ENCODE measurements at regions of chr20 and their contacts with region 1.

Region 1: GRCh38 chr20:37178839-37179670 is at the starts of genes MROH8 and RPN2:
- DNase-seq: peak; percentile 100
- H3K4me3 ChIP-seq: peak within 1 kb of the TSS; percentile 71
- H3K4me3 Mint-ChIP-seq: peak within 1 kb of the TSS; percentile 94
- H3K27ac Mint-ChIP-seq: peak within 1 kb of the TSS; percentile 98
- H3K4me1 ChIP-seq: peaks cover 8% of the 10 kb centered on the region; the same call in 1 of the 2 replicates
- H3K4me1 Mint-ChIP-seq: peaks cover 18% of the 10 kb centered on the region
- H3K27me3 ChIP-seq: no peaks in the 10 kb centered on the region
- H3K27me3 Mint-ChIP-seq: no peaks in the 10 kb centered on the region
- CTCF ChIP-seq: no peak
- total RNA-seq, gene MROH8: 1.3 and 2.6 TPM in 2 replicates
- total RNA-seq, gene RPN2: 789 and 838 TPM in 2 replicates

Region 2: DNA sequence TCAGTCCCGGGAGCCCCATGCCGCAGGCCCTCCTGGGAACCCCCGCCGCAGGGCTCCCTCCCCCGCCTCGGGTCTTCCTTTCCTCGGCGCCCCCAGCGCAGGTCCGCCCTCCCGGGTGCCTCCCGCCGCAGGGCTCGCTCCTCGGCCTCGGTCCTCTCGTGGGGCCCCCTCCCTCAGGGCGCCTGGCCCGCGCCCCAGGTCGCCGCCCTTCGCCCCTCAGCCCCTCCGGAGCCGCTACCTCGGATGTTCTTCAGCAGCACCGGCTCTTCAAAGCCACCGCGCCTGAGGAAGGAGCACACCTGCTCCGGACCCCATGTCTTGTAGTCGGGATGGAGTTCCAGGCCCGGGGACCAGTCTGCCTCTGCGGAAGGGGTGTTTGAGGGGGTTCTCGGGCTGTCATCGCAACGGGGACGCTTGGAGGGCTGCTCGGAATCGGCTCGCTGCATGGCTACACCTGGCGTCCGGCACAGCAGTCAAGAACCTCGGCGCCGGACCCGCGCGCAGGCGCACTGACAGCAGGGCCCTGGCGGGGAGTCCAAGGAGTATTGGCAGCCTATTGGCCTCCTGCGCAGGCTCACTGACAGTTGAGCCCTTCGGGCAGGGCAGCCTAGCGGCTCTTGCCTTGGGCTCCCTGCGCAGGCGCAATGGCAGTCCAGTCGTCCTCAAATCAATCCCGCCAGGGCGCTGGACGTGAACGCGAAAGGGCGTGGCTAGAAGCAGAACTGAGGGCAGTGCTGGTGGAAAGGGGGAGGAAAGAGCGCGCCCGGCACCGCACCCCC is 227.7 kb before region 1 on chr20 and contains the start of gene SAMHD1:
- CTCF ChIA-PET with region 1: no interaction called
- POLR2A ChIA-PET with region 1: no interaction called
- intact Hi-C with region 1: loop called (anchors 1 kb)
- DNase-seq: peak; percentile 100
- H3K4me3 ChIP-seq: peak within 1 kb of the TSS; percentile 95
- H3K4me3 Mint-ChIP-seq: peak within 1 kb of the TSS; percentile 98
- H3K27ac Mint-ChIP-seq: peak within 1 kb of the TSS; percentile 96
- H3K4me1 ChIP-seq: peaks cover 3% of the 10 kb centered on the region; the same call in 1 of the 2 replicates
- H3K4me1 Mint-ChIP-seq: peaks cover 18% of the 10 kb centered on the region
- H3K27me3 ChIP-seq: no peaks in the 10 kb centered on the region
- H3K27me3 Mint-ChIP-seq: no peaks in the 10 kb centered on the region
- CTCF ChIP-seq: peak in 1 of 2 experiments; percentile 16
- total RNA-seq, gene SAMHD1: 56.8 and 63.0 TPM in 2 replicates

Region 3: GRCh38 chr20:37007898-37008649 is 171.0 kb before region 1 on chr20:
- CTCF ChIA-PET with region 1: interaction called, 7 read pairs
- POLR2A ChIA-PET with region 1: interaction called, 5 read pairs
- intact Hi-C with region 1: loop called (anchors 10 kb)
- DNase-seq: peak; percentile 42
- H3K4me3 ChIP-seq: no peak overlapping the region
- H3K4me3 Mint-ChIP-seq: no peak overlapping the region
- H3K27ac Mint-ChIP-seq: no peak overlapping the region
- H3K4me1 ChIP-seq: no peaks in the 10 kb centered on the region
- H3K4me1 Mint-ChIP-seq: no peaks in the 10 kb centered on the region
- H3K27me3 ChIP-seq: no peaks in the 10 kb centered on the region
- H3K27me3 Mint-ChIP-seq: no peaks in the 10 kb centered on the region
- CTCF ChIP-seq: peak; percentile 29 to 42

Region 4: GRCh38 chr20:37095599-37096414 is 83.2 kb before region 1 on chr20 and contains the start of gene RBL1:
- CTCF ChIA-PET with region 1: interaction called, 9 read pairs
- POLR2A ChIA-PET with region 1: interaction called, 38 read pairs
- intact Hi-C with region 1: loop called (anchors 1 kb)
- DNase-seq: peak; percentile 96
- H3K4me3 ChIP-seq: peak within 1 kb of the TSS; percentile 75
- H3K4me3 Mint-ChIP-seq: peak within 1 kb of the TSS; percentile 91
- H3K27ac Mint-ChIP-seq: peak within 1 kb of the TSS; percentile 95
- H3K4me1 ChIP-seq: peaks cover 12% of the 10 kb centered on the region
- H3K4me1 Mint-ChIP-seq: peaks cover 20% of the 10 kb centered on the region
- H3K27me3 ChIP-seq: no peaks in the 10 kb centered on the region
- H3K27me3 Mint-ChIP-seq: no peaks in the 10 kb centered on the region
- CTCF ChIP-seq: peak; percentile 28 to 70
- total RNA-seq, gene RBL1: 35.9 and 37.0 TPM in 2 replicates

Region 5: GRCh38 chr20:37192137-37192854 is 13.2 kb after region 1 on chr20:
- CTCF ChIA-PET with region 1: interaction called, 49 read pairs
- POLR2A ChIA-PET with region 1: interaction called, 20 read pairs
- intact Hi-C with region 1: no loop called
- DNase-seq: peak; percentile 87 to 91
- H3K4me3 ChIP-seq: no peak overlapping the region
- H3K4me3 Mint-ChIP-seq: no peak overlapping the region
- H3K27ac Mint-ChIP-seq: peak overlapping the region; percentile 16
- H3K4me1 ChIP-seq: no peaks in the 10 kb centered on the region
- H3K4me1 Mint-ChIP-seq: peaks cover 38% of the 10 kb centered on the region
- H3K27me3 ChIP-seq: no peaks in the 10 kb centered on the region
- H3K27me3 Mint-ChIP-seq: no peaks in the 10 kb centered on the region
- CTCF ChIP-seq: peak; percentile 98 to 99

Region 6: GRCh38 chr20:37288091-37288490 is 109.0 kb after region 1 on chr20:
- CTCF ChIA-PET with region 1: interaction called, 3 read pairs
- POLR2A ChIA-PET with region 1: interaction called, 13 read pairs
- intact Hi-C with region 1: no loop called
- DNase-seq: no peak
- H3K4me3 ChIP-seq: no peak overlapping the region
- H3K4me3 Mint-ChIP-seq: peak overlapping the region; percentile 86
- H3K27ac Mint-ChIP-seq: no peak overlapping the region
- H3K4me1 ChIP-seq: peaks cover 20% of the 10 kb centered on the region
- H3K4me1 Mint-ChIP-seq: peaks cover 7% of the 10 kb centered on the region
- H3K27me3 ChIP-seq: no peaks in the 10 kb centered on the region
- H3K27me3 Mint-ChIP-seq: no peaks in the 10 kb centered on the region
- CTCF ChIP-seq: no peak